Breast epithelium (tissue), 4 donors: ENCODE measurements at regions of chr10 and their contacts with region 1.

Region 1: DNA sequence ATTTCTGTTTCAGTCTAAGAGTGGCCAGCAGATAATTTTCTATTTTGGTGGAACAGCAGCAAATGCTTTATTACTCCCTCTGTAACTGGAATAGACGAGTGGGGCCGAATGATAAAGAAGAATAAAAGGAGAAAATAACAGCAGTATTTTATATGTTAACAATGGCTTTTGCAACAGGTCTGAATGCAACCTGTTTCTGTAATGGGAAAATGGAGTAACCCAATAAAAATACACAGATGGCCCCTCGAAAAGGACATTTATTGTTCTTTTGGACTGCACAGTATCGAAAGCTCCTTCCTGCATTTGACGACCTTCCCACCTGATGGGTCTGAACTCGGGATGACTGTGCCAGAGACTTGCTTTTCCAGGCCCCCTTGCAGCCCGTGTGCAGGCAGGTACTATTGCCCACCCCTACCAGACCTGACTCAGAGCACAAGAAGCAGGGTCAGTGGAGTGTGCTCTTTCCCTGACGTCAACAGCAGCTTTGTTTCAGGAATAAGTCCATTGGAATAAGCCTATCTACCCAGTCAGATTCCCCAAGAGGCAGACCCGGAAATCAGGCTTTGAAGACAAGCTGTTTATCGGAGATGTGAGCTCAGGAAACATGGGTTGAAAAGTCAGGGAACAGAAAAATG is 306.5 kb upstream of the NEBL start:
- DNase-seq: no peak
- H3K4me3 ChIP-seq: no peak overlapping the region
- H3K27ac ChIP-seq: no peak overlapping the region
- H3K4me1 ChIP-seq: no peaks in the 10 kb centered on the region
- H3K27me3 ChIP-seq: no peaks in the 10 kb centered on the region
- CTCF ChIP-seq: no peak
- POLR2A ChIP-seq: no peak

Region 2: GRCh38 chr10:21249435-21249834 is 45.8 kb after region 1 on chr10:
- intact Hi-C with region 1: loop called (anchors 2 kb)
- DNase-seq: no peak
- H3K4me3 ChIP-seq: no peak overlapping the region
- H3K27ac ChIP-seq: no peak overlapping the region
- H3K4me1 ChIP-seq: no peaks in the 10 kb centered on the region
- H3K27me3 ChIP-seq: no peaks in the 10 kb centered on the region
- CTCF ChIP-seq: no peak
- POLR2A ChIP-seq: no peak

Region 3: GRCh38 chr10:21300551-21300950 is 97.0 kb after region 1 on chr10:
- intact Hi-C with region 1: no loop called
- DNase-seq: no peak
- H3K4me3 ChIP-seq: no peak overlapping the region
- H3K27ac ChIP-seq: no peak overlapping the region
- H3K4me1 ChIP-seq: no peaks in the 10 kb centered on the region
- H3K27me3 ChIP-seq: no peaks in the 10 kb centered on the region
- CTCF ChIP-seq: no peak
- POLR2A ChIP-seq: no peak